ENCODE measurements at regions of chr5 and their contacts with region 1.

Region 1: DNA sequence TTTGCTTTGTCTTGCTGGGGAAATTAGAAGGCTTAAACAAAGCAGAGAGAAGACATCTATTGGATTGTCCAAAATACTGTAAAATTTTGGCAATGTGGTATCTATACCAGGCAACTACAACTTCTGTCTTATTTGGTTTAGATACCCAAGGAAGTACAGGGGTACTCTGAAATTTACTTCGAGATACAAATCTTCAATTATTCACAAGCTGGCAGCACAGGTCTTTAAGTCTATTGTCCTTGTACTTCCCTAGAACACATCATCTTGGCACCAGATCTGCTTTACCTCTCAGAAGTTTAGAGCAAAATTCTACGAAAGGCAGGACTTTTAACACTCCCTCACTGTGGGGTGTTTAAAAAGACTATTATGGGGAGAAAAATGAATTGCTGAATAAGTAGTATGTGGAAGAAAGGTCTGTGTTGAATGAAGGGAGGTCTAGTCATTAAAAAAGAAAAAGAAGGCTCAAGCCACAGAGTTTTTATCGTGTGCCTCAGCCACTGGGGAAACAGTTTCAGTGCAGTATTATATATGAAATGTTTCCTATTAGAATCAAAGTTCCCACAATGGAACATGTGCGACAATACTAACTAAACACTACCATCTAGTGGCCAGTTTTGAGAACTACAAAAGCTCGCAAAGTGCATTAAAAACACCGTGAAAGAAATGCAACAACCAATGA is 93.7 kb downstream of the PDE4D start:
- DNase-seq: peak; percentile 28 to 58
- H3K4me3 ChIP-seq: peak overlapping the region; percentile 49; the same call in 1 of the 2 replicates
- H3K27ac ChIP-seq: peak overlapping the region; percentile 94
- H3K4me1 ChIP-seq: peaks cover 32% of the 10 kb centered on the region
- H3K27me3 ChIP-seq: no peaks in the 10 kb centered on the region
- CTCF ChIP-seq: peak; percentile 86

Region 2: DNA sequence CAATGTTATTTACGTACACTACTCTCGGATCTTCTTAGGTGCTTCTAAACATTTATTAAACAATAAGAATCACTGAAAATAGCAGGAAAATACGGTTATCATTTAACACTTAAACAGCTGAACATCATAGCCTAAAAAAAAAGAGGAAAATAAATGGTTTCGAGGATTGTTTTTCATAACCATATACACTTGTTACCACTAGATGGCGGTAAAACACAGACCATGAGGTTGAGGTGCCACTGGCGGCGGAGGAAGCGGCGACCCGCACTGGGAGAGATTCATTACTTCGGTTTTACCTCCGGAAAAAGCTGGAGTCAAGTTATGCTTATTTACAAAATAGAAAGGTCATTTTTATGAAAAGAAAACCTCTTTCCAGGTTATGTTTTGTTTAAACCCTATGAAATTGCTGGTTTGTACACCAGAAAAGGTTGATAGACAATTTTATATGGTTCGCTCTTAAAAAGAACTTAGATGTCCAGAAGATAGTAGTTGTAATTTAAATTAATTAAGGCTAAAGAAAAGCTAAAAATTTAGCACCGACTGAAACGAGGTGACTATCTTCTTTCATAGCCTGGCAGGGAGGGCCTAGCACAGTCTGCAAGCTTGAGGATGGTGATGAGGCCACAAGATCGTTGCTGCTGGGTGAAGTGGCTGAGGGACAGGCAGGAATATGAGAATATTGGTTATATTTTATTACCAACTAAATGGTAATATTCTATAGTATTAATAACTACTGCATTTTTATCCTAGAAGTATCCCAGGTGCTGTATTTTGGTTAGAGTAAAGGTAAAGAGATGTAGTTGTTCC is 611.2 kb before region 1 on chr5:
- CTCF ChIA-PET with region 1: interaction called, 3 read pairs
- POLR2A ChIA-PET with region 1: no interaction called
- intact Hi-C with region 1: loop called (anchors 2 kb)
- DNase-seq: peak in 1 of 2 experiments; percentile 35
- H3K4me3 ChIP-seq: no peak overlapping the region; the same call in 1 of the 2 replicates
- H3K27ac ChIP-seq: no peak overlapping the region
- H3K4me1 ChIP-seq: peaks cover 4% of the 10 kb centered on the region
- H3K27me3 ChIP-seq: no peaks in the 10 kb centered on the region
- CTCF ChIP-seq: peak; percentile 89

Region 3: DNA sequence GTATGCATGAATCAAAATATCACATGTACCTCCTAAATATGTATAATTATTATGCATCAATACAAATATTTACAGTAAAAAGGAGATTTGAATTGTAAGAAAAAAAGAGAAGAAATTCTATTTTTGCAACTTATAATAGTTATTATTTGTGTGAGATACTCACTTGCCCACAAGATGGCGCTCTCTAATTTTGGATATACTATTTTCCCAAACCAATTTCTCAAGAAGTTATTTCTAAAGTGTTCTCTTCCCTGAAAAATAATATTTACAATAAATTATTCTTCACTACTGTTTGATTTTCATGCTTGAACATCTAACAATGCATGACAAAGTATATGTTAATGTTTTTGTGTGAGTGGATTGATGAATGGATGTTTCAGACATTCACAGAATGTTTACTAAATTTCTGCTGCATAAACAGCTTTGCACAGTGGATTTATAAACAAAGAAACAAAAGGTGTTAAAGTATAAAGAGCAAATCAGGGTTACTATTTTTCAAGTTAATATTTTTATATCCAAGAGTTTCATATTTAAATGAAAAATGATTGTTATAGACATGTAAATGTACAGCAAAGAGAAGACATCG is 409.6 kb before region 1 on chr5:
- CTCF ChIA-PET with region 1: interaction called, 3 read pairs
- POLR2A ChIA-PET with region 1: no interaction called
- intact Hi-C with region 1: loop called (anchors 1 kb)
- DNase-seq: no peak
- H3K4me3 ChIP-seq: no peak overlapping the region
- H3K27ac ChIP-seq: no peak overlapping the region
- H3K4me1 ChIP-seq: no peaks in the 10 kb centered on the region
- H3K27me3 ChIP-seq: no peaks in the 10 kb centered on the region
- CTCF ChIP-seq: peak; percentile 88

Region 4: GRCh38 chr5:59562756-59563389 is 236.9 kb before region 1 on chr5:
- CTCF ChIA-PET with region 1: no interaction called
- POLR2A ChIA-PET with region 1: no interaction called
- intact Hi-C with region 1: loop called (anchors 1 kb)
- DNase-seq: peak; percentile 90 to 99
- H3K4me3 ChIP-seq: peak overlapping the region; percentile 15; the same call in 1 of the 2 replicates
- H3K27ac ChIP-seq: peak overlapping the region; percentile 83
- H3K4me1 ChIP-seq: peaks cover 47% of the 10 kb centered on the region
- H3K27me3 ChIP-seq: no peaks in the 10 kb centered on the region
- CTCF ChIP-seq: no peak

Region 5: GRCh38 chr5:59724482-59725391 is 75.1 kb before region 1 on chr5:
- CTCF ChIA-PET with region 1: no interaction called
- POLR2A ChIA-PET with region 1: no interaction called
- intact Hi-C with region 1: loop called (anchors 5 kb)
- DNase-seq: peak in 1 of 2 experiments; percentile 9
- H3K4me3 ChIP-seq: no peak overlapping the region
- H3K27ac ChIP-seq: no peak overlapping the region
- H3K4me1 ChIP-seq: peaks cover 12% of the 10 kb centered on the region
- H3K27me3 ChIP-seq: no peaks in the 10 kb centered on the region
- CTCF ChIP-seq: peak; percentile 64

Region 6: GRCh38 chr5:59768152-59769040 is 31.4 kb before region 1 on chr5:
- CTCF ChIA-PET with region 1: no interaction called
- POLR2A ChIA-PET with region 1: no interaction called
- intact Hi-C with region 1: loop called (anchors 2 kb)
- DNase-seq: peak; percentile 58 to 76
- H3K4me3 ChIP-seq: peak overlapping the region; percentile 88
- H3K27ac ChIP-seq: peak overlapping the region; percentile 65
- H3K4me1 ChIP-seq: peaks cover 61% of the 10 kb centered on the region
- H3K27me3 ChIP-seq: no peaks in the 10 kb centered on the region
- CTCF ChIP-seq: no peak